ENCODE measurements at regions of chr17 and their contacts with region 1.

Region 1: GRCh38 chr17:48457080-48457836 is 27.2 kb upstream of the SKAP1 start:
- DNase-seq: peak; percentile 32 to 78 (median 56)
- ATAC-seq: peak; percentile 51 to 91 (median 76)
- H3K4me3 ChIP-seq: no peak overlapping the region
- H3K27ac ChIP-seq: no peak overlapping the region
- H3K4me1 ChIP-seq: peaks cover 0 to 14% (median 0%) of the 10 kb centered on the region in 12 donors
- H3K27me3 ChIP-seq: peaks cover 0 to 72% (median 18%) of the 10 kb centered on the region in 9 donors
- CTCF ChIP-seq: peak; percentile 80 to 97 (median 90)
- POLR2A ChIP-seq: no peak

Region 2: GRCh38 chr17:47066841-47067682 is 1390.2 kb before region 1 on chr17:
- intact Hi-C with region 1: no loop called
- DNase-seq: peak; percentile 81 to 89 (median 85)
- ATAC-seq: peak; percentile 95 to 98 (median 96)
- H3K4me3 ChIP-seq: peak overlapping the region; percentile 51 to 93 (median 81)
- H3K27ac ChIP-seq: peak overlapping the region; percentile 75 to 92 (median 88)
- H3K4me1 ChIP-seq: peaks cover 2 to 35% (median 12%) of the 10 kb centered on the region in 12 donors
- H3K27me3 ChIP-seq: no peaks in the 10 kb centered on the region
- CTCF ChIP-seq: peak in 6 of 12 donors; percentile 11 to 38 (median 24)
- POLR2A ChIP-seq: peak in 1 of 2 donors; percentile 53

Region 3: DNA sequence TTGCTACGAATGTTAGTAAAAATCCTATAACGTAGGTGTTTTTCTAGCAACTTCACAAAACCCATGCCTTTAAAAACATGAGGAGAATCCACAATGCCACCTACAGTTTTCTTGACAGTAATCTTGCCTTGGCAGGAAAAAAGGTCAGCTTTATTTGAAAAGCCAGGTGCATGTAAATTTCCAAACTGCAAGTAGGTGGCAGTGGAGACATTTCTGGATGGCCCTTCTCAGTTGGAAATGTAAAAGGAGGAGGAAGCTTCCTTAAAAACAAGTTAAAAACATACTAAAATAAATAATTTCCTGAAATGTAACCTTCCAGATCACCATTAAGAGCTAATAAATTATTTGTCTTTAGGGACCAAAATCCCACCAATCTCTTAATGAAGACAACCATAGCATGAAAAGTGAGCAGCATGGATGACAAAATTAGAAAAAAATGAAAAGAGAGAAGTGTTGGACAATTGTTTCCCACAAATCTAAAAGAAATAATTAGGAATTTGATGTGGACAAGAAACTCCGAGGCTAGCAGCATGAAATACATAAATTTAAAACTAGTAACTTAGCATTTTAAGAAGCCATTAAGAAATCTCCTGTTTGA is 197.5 kb before region 1 on chr17:
- intact Hi-C with region 1: loop called in 2 of 10 experiments (anchors 5 kb)
- DNase-seq: no peak
- ATAC-seq: no peak
- H3K4me3 ChIP-seq: no peak overlapping the region
- H3K27ac ChIP-seq: no peak overlapping the region
- H3K4me1 ChIP-seq: no peaks in the 10 kb centered on the region
- H3K27me3 ChIP-seq: peaks cover 0 to 26% (median 2%) of the 10 kb centered on the region in 9 donors
- CTCF ChIP-seq: peak in 10 of 12 donors; percentile 26 to 60 (median 43)
- POLR2A ChIP-seq: no peak

Region 4: GRCh38 chr17:48344246-48344645 is 113.0 kb before region 1 on chr17:
- intact Hi-C with region 1: loop called in 2 of 10 experiments (anchors 5 to 10 kb)
- DNase-seq: no peak
- ATAC-seq: no peak
- H3K4me3 ChIP-seq: no peak overlapping the region
- H3K27ac ChIP-seq: no peak overlapping the region
- H3K4me1 ChIP-seq: no peaks in the 10 kb centered on the region
- H3K27me3 ChIP-seq: peaks cover 0 to 84% (median 9%) of the 10 kb centered on the region in 9 donors
- CTCF ChIP-seq: no peak
- POLR2A ChIP-seq: no peak

Region 5: GRCh38 chr17:48351831-48352332 is 105.4 kb before region 1 on chr17:
- intact Hi-C with region 1: loop called in 3 of 10 experiments (anchors 5 to 10 kb)
- DNase-seq: no peak
- ATAC-seq: no peak
- H3K4me3 ChIP-seq: no peak overlapping the region
- H3K27ac ChIP-seq: no peak overlapping the region
- H3K4me1 ChIP-seq: no peaks in the 10 kb centered on the region
- H3K27me3 ChIP-seq: peaks cover 0 to 82% (median 7%) of the 10 kb centered on the region in 9 donors
- CTCF ChIP-seq: peak; percentile 46 to 71 (median 60)
- POLR2A ChIP-seq: no peak

Region 6: DNA sequence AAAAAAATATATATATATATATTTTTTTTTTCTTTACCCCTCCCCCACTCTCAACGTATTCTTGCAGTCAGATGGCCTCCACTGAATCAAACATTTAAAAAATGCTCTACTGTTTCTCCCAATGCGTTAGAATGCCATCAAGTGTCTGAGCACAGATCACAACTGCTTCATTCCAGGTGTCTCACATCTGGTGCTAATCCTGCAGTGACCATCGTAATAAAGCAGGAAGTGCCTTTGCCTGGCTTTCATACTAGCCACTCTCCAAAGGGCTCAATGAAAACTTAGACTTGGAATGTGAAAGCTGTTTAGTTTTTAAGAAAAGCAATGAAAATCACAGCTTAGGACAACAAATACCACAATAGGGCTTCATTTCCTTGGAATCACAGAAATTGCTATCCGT is 64.4 kb before region 1 on chr17:
- intact Hi-C with region 1: no loop called
- DNase-seq: no peak
- ATAC-seq: no peak
- H3K4me3 ChIP-seq: no peak overlapping the region
- H3K27ac ChIP-seq: no peak overlapping the region
- H3K4me1 ChIP-seq: no peaks in the 10 kb centered on the region
- H3K27me3 ChIP-seq: peaks cover 0 to 67% (median 14%) of the 10 kb centered on the region in 9 donors
- CTCF ChIP-seq: no peak
- POLR2A ChIP-seq: no peak